Esophagus squamous epithelium (tissue), 5 donors: ENCODE measurements at regions of chr16 and their contacts with region 1.

Region 1: DNA sequence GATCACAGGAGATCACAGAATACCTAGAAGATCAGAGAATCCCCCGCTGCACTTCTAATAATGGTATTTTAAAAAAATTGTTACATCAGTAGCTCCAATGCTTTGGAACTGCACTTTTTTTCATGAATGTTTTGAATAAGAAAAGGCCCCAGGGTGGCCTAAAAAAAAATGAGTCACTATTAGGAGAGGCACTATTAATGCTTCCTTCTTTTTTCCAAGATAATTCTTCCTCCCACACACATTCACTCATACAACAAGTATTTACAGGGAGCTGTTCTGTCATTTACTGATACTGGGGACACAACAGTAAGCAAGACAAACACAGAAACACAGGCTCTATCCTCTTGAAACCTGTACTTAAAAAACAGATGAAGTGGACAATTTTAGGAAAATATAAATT is 675 bp upstream of the PDZD9 start:
- DNase-seq: no peak
- H3K4me3 ChIP-seq: no peak overlapping the region
- H3K27ac ChIP-seq: peak overlapping the region in 1 of 4 donors; percentile 15
- H3K4me1 ChIP-seq: peaks cover 0 to 37% (median 11%) of the 10 kb centered on the region in 3 donors
- H3K27me3 ChIP-seq: no peaks in the 10 kb centered on the region
- CTCF ChIP-seq: no peak
- POLR2A ChIP-seq: no peak

Region 2: GRCh38 chr16:22070361-22071330 is 69.1 kb after region 1 on chr16:
- intact Hi-C with region 1: loop called (anchors 5 kb)
- DNase-seq: no peak
- H3K4me3 ChIP-seq: peak overlapping the region in 1 of 4 donors; percentile 32
- H3K27ac ChIP-seq: peak overlapping the region in 3 of 4 donors; percentile 15 to 50 (median 32)
- H3K4me1 ChIP-seq: peaks cover 4 to 33% (median 14%) of the 10 kb centered on the region in 3 donors
- H3K27me3 ChIP-seq: no peaks in the 10 kb centered on the region
- CTCF ChIP-seq: no peak
- POLR2A ChIP-seq: no peak

Region 3: GRCh38 chr16:22188595-22189442 is 187.2 kb after region 1 on chr16:
- intact Hi-C with region 1: loop called (anchors 10 kb)
- DNase-seq: no peak
- H3K4me3 ChIP-seq: peak overlapping the region in 2 of 4 donors; percentile 73 to 76
- H3K27ac ChIP-seq: peak overlapping the region; percentile 96 to 99 (median 98)
- H3K4me1 ChIP-seq: peaks cover 19 to 46% (median 28%) of the 10 kb centered on the region in 3 donors
- H3K27me3 ChIP-seq: no peaks in the 10 kb centered on the region
- CTCF ChIP-seq: peak; percentile 75 to 86 (median 80)
- POLR2A ChIP-seq: no peak

Region 4: DNA sequence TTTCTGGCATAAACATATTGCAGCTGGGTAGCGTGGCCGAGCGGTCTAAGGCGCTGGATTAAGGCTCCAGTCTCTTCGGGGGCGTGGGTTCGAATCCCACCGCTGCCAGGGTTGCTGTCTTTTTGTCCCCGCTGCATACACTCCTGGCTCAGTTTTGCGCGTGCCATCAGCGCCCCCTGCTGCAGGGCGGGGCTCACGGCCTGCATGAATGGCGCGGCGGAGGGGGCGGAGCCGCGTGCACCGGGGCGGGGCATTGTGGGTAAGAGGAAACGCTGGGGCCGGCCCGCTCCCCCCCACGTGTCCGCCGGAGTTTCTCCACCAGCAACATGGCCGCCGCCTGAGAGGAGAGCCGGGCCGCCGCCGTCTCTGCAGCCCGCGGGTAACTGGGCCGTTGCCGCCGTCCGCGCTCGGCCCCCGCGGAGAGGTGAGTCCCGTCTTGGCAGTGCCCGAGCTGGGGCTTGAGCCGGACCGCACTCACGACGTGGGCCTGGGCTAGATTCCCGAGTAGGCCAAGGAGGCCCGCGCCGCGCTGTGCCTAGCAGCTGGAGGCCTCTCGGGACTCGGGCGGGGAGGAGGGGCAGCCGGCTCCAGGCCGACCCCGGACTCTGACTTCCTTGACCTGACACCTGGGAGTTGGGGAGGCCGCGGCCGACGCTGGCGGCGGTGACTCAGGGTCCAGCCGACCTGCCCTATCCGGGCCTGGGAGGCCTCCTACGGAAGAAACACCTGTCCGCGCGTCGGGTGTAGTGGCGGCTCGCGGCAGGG is 295.7 kb after region 1 on chr16 and contains the start of gene POLR3E:
- intact Hi-C with region 1: loop called (anchors 5 kb)
- DNase-seq: peak; percentile 89
- H3K4me3 ChIP-seq: peak within 1 kb of the TSS; percentile 78 to 93 (median 88)
- H3K27ac ChIP-seq: peak within 1 kb of the TSS; percentile 93 to 98 (median 96)
- H3K4me1 ChIP-seq: peaks cover 12 to 53% (median 13%) of the 10 kb centered on the region in 3 donors
- H3K27me3 ChIP-seq: no peaks in the 10 kb centered on the region
- CTCF ChIP-seq: peak; percentile 81 to 100 (median 98)
- POLR2A ChIP-seq: peak in 3 of 4 donors; percentile 13 to 72 (median 32)
- total RNA-seq, gene POLR3E: 21.5 to 57.2 (median 37.7) TPM